ENCODE measurements at regions of chr20 and their contacts with region 1.

Region 1: DNA sequence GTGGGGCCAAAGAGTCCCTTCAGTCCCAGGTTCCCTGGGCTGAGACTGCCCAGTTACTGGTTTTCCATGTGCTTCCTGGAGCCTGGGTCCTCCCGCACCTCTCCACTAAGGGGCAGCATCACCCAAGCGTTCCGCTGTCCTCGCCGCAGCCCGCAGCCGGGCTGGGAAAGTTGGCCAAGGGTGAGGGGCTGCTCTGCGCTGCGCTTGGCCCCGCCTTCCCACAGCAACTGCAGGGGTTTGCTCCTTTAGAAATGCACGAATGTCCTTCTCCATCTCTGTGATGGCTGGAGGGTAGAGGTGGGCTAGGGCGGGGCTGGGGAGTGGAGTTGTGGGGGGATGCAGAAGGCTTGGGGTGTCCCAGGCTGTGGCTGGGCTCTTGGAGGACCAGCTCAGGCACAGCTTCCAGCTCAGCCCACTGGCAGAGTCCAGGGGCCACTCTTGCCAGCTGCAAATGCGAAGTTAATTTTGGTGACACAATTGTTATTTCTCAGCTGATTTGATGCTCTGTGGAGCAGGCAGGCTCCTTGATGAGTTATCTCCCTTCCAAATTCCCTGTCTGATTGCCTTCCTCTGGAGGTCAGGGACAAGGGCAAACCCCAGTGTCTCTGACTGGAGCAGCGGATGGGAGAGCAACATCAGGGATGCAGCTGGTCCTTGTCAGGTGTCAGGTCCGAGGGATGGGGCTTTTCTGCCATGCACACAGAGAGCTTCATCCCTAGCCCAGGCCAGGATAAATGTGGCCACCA is 63.2 kb downstream of the NOL4L start:
- DNase-seq: peak; percentile 78
- H3K4me3 Mint-ChIP-seq: no peak overlapping the region
- H3K27ac Mint-ChIP-seq: peak overlapping the region; percentile 73
- H3K4me1 Mint-ChIP-seq: peaks cover 60% of the 10 kb centered on the region
- H3K27me3 Mint-ChIP-seq: no peaks in the 10 kb centered on the region

Region 2: GRCh38 chr20:32535953-32536823 is 14.2 kb after region 1 on chr20:
- CTCF ChIA-PET with region 1: interaction called, 173 read pairs
- DNase-seq: peak; percentile 93
- H3K4me3 Mint-ChIP-seq: peak overlapping the region; percentile 81
- H3K27ac Mint-ChIP-seq: peak overlapping the region; percentile 99
- H3K4me1 Mint-ChIP-seq: peaks cover 85% of the 10 kb centered on the region
- H3K27me3 Mint-ChIP-seq: no peaks in the 10 kb centered on the region

Region 3: DNA sequence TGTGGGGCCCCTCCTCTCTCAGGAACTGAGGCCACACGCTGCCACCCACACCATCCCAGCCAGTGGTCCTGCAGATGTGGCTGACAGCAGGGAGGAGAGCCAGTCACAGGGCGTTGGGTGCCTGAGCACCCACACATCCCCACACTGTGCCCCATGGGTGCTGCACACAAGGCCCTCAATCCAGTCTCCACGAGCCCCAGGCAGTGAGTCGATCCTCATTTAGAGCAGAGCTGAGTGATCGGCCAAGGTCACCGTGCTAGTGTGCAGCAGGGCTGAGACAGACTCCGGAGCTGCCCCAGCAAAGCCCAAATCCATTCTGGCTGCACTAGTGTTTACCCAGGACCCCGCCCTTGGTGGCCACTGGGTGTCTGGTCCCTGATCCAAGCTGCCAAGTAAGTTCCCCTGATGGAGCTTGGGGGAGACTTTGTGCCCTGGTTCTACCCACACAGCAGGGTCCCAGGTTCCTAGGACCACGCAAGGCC is 142.8 kb after region 1 on chr20:
- CTCF ChIA-PET with region 1: no interaction called
- DNase-seq: no peak
- H3K4me3 Mint-ChIP-seq: no peak overlapping the region
- H3K27ac Mint-ChIP-seq: no peak overlapping the region
- H3K4me1 Mint-ChIP-seq: peaks cover 5% of the 10 kb centered on the region
- H3K27me3 Mint-ChIP-seq: no peaks in the 10 kb centered on the region